CD4-positive, alpha-beta memory T cell (primary cell): ENCODE measurements at regions of chr1 and their contacts with region 1.

Region 1: GRCh38 chr1:151510957-151511635 is at the start of gene CGN:
- DNase-seq: peak; percentile 86 to 92 (median 86)
- H3K4me3 ChIP-seq: peak within 1 kb of the TSS; percentile 65 to 84
- H3K4me3 Mint-ChIP-seq: peak within 1 kb of the TSS; percentile 89 to 98 (median 93)
- H3K27ac ChIP-seq: peak within 1 kb of the TSS; percentile 53
- H3K27ac Mint-ChIP-seq: peak within 1 kb of the TSS; percentile 69 to 96 (median 91)
- H3K4me1 ChIP-seq: peaks cover 31% of the 10 kb centered on the region
- H3K4me1 Mint-ChIP-seq: peaks cover 13 to 39% (median 25%) of the 10 kb centered on the region in 4 donors
- H3K27me3 ChIP-seq: no peaks in the 10 kb centered on the region
- H3K27me3 Mint-ChIP-seq: no peaks in the 10 kb centered on the region
- total RNA-seq, gene CGN: 0.81 to 1.4 TPM

Region 2: DNA sequence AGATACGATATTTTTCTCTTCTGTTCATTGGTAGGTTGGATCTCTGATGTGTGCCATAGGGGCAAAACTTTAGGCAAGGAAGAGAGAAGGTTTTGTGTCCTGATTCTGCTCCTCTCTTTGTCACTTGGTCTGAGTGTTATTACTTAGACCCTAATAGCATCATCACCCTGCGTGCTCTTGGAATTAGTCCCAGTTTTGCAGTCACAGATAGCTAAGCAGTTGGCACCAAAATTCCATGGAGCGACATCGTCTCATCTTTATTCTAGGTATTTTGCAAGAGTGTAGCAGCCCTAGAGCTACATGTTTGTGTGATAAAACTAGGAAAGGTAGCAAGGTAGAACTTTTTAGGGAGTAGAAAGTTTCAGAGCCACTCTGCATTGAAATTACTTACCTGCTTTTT is 289.0 kb before region 1 on chr1:
- CTCF ChIA-PET with region 1: no interaction called
- POLR2A ChIA-PET with region 1: no interaction called
- intact Hi-C with region 1: no loop called
- DNase-seq: no peak
- H3K4me3 ChIP-seq: no peak overlapping the region
- H3K4me3 Mint-ChIP-seq: no peak overlapping the region
- H3K27ac ChIP-seq: no peak overlapping the region
- H3K27ac Mint-ChIP-seq: peak overlapping the region in 1 of 7 donors; percentile 63
- H3K4me1 ChIP-seq: no peaks in the 10 kb centered on the region
- H3K4me1 Mint-ChIP-seq: peaks cover under 1 to 11% (median 3%) of the 10 kb centered on the region in 4 donors
- H3K27me3 ChIP-seq: no peaks in the 10 kb centered on the region
- H3K27me3 Mint-ChIP-seq: no peaks in the 10 kb centered on the region

Region 3: GRCh38 chr1:151443846-151444782 is 67.0 kb before region 1 on chr1:
- CTCF ChIA-PET with region 1: no interaction called
- POLR2A ChIA-PET with region 1: no interaction called
- intact Hi-C with region 1: loop called (anchors 1 kb)
- DNase-seq: peak; percentile 68 to 82 (median 68)
- H3K4me3 ChIP-seq: no peak overlapping the region
- H3K4me3 Mint-ChIP-seq: no peak overlapping the region
- H3K27ac ChIP-seq: no peak overlapping the region
- H3K27ac Mint-ChIP-seq: peak overlapping the region in 3 of 7 donors; percentile 41 to 79 (median 69)
- H3K4me1 ChIP-seq: peaks cover 50% of the 10 kb centered on the region
- H3K4me1 Mint-ChIP-seq: peaks cover 32 to 65% (median 50%) of the 10 kb centered on the region in 4 donors
- H3K27me3 ChIP-seq: no peaks in the 10 kb centered on the region
- H3K27me3 Mint-ChIP-seq: no peaks in the 10 kb centered on the region

Region 4: GRCh38 chr1:151472856-151473731 is 38.0 kb before region 1 on chr1:
- CTCF ChIA-PET with region 1: no interaction called
- POLR2A ChIA-PET with region 1: no interaction called
- intact Hi-C with region 1: loop called (anchors 5 kb)
- DNase-seq: peak in 4 of 5 donors; percentile 24 to 64 (median 34)
- H3K4me3 ChIP-seq: peak overlapping the region in 1 of 2 donors; percentile 50
- H3K4me3 Mint-ChIP-seq: peak overlapping the region; percentile 62 to 88 (median 80)
- H3K27ac ChIP-seq: peak overlapping the region; percentile 35
- H3K27ac Mint-ChIP-seq: peak overlapping the region; percentile 9 to 84 (median 69)
- H3K4me1 ChIP-seq: no peaks in the 10 kb centered on the region
- H3K4me1 Mint-ChIP-seq: peaks cover 0 to 18% (median 7%) of the 10 kb centered on the region in 4 donors
- H3K27me3 ChIP-seq: no peaks in the 10 kb centered on the region
- H3K27me3 Mint-ChIP-seq: peaks cover 1 to 6% of the 10 kb centered on the region in 2 donors

Region 5: DNA sequence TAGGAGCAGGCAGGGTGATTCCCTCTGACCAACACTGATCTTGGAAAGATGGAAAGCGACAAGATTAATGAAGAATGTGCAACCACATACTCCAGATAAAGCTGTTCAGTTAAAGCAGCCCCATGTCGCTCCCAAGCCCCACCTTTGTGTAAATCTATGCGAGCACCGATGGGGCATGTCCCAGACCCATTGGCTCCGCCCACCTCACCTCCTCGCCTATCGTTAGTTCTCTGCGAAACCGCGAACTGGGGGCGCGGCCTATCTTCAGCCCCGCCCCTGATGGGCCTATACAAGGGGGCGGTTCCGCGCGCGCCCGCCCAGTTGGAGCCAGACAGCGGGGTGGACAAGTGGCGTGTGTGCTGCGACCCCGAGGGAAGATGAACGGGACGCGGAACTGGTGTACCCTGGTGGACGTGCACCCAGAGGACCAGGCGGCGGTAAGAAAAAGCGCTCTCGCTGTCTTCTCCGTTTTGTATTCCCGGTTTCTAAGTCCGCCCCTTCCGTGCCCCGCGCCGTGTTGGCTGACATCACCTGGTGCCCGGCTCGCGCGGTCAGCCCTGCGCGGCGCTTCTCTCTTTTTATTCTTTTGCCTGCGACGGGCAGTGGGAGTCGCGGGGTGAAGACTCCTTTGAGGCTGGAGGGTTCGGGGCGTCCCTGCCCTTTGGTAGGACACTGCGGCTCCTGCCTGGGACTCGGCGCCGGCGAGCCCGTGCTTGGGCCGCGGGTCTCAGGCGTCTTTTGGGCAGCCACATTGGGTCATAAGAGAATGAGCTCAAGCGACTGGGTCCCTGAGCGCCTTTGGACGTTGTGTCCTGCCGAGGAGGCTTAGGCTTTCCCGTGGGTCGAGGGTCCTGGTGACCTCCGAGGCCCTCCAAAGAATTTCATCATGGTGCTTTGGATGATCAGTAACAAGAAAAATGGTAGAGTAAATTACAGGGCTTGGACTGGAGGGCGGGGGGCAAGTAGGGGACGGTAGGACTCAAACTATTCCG is 29.2 kb after region 1 on chr1 and contains the start of gene TUFT1:
- CTCF ChIA-PET with region 1: interaction called, 7 read pairs
- POLR2A ChIA-PET with region 1: interaction called, 4 read pairs
- intact Hi-C with region 1: loop called (anchors 2 kb)
- DNase-seq: peak; percentile 92 to 96 (median 93)
- H3K4me3 ChIP-seq: peak within 1 kb of the TSS; percentile 50 to 62
- H3K4me3 Mint-ChIP-seq: peak within 1 kb of the TSS; percentile 95 to 98 (median 96)
- H3K27ac ChIP-seq: peak within 1 kb of the TSS; percentile 57
- H3K27ac Mint-ChIP-seq: peak within 1 kb of the TSS; percentile 78 to 97 (median 94)
- H3K4me1 ChIP-seq: peaks cover 18% of the 10 kb centered on the region
- H3K4me1 Mint-ChIP-seq: peaks cover 8 to 26% (median 19%) of the 10 kb centered on the region in 4 donors
- H3K27me3 ChIP-seq: no peaks in the 10 kb centered on the region
- H3K27me3 Mint-ChIP-seq: no peaks in the 10 kb centered on the region
- total RNA-seq, gene TUFT1: 3.5 to 4.4 TPM

Region 6: DNA sequence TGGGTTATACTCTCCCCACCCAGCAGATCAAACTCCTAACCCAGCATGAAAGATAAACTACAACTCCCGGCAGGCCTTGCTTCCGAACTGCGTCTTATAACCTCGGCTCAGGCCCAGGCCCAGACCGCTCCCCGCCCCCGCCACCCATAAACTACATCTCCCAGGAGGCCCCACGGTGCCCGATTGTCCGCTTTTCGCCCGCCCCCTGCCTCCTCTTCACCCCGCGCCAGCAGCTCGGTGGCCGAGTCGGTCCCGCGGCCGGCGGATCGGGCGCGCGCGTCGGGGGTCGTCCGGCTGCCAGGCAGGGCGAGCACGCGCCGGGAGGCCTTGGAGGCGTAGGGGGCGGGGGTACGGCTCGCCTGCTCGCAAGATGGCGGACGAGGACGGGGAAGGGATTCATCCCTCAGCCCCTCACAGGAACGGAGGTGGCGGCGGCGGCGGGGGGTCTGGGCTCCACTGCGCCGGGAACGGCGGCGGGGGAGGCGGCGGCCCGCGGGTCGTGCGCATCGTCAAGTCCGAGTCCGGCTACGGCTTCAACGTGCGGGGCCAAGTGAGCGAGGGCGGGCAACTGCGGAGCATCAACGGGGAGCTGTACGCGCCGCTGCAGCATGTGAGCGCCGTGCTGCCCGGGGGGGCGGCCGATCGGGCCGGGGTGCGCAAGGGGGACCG is 100.9 kb after region 1 on chr1 and contains the start of gene SNX27:
- CTCF ChIA-PET with region 1: no interaction called
- POLR2A ChIA-PET with region 1: no interaction called
- intact Hi-C with region 1: loop called (anchors 1 kb)
- DNase-seq: peak; percentile 87 to 96 (median 89)
- H3K4me3 ChIP-seq: peak within 1 kb of the TSS; percentile 73 to 77
- H3K4me3 Mint-ChIP-seq: peak within 1 kb of the TSS; percentile 98 to 100 (median 99)
- H3K27ac ChIP-seq: peak within 1 kb of the TSS; percentile 87
- H3K27ac Mint-ChIP-seq: peak within 1 kb of the TSS; percentile 89 to 99 (median 97)
- H3K4me1 ChIP-seq: peaks cover 32% of the 10 kb centered on the region
- H3K4me1 Mint-ChIP-seq: peaks cover 31 to 46% (median 39%) of the 10 kb centered on the region in 4 donors
- H3K27me3 ChIP-seq: no peaks in the 10 kb centered on the region
- H3K27me3 Mint-ChIP-seq: peaks cover 0 to 1% of the 10 kb centered on the region in 2 donors
- total RNA-seq, gene SNX27: 40.0 to 44.3 TPM